Activated CD4-positive, alpha-beta memory T cell treated with anti-CD3 and anti-CD28 coated beads, Interleukin-2, amount 10 ng/mL, durations not matched to agents 7 days and 5 days (primary cell): ENCODE measurements at regions of chr2 and their contacts with region 1.

Region 1: DNA sequence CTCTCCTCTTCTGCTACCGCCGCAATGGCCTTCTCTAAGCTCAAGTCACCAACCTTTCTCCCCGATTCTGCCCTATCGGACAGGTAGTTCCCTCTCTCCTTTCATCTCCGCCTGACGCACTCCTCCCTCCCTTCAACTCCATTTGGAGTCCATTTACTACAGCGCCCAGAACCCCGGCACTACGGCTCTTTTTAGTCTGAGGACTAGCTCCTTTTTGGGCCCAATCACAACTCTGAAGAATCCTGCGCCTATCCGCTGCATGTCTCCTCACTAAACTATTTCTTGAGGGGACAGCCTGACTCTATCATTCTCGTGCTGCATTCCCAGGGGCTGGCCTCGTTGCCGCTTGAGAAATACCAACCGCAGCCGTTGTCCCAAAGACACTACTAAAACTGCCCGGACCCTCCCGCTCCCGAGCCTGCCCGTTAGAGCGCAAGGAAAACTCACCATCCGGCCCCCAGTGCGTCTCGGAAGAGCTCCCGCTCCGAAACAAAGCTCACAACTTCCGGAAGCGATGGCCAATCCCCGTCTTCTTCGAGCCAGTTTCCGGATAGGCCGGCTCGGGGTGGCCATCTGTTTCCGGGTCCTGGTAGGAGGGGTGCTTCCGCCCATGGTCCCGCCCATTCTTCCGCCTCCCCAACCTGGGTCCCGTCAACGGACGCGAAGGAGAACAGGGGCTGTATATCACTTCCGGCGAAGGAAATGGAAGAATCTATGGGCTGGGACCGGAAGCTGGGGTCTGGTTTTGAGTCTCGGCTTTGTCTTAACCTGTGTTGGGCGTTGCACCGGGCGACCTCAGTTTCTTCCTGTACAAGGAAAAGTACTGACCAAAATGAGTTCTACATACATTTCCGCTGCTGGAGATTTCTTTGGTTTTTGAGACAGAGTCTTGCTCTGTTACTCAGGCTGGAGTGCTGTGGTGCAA is at the start of gene TPRKB:
- DNase-seq: peak; percentile 98
- H3K4me3 Mint-ChIP-seq: peak within 1 kb of the TSS; percentile 97
- H3K27ac Mint-ChIP-seq: peak within 1 kb of the TSS; percentile 91
- H3K4me1 Mint-ChIP-seq: peaks cover 20% of the 10 kb centered on the region
- H3K27me3 Mint-ChIP-seq: no peaks in the 10 kb centered on the region
- total RNA-seq, gene TPRKB: 32.9 TPM

Region 2: DNA sequence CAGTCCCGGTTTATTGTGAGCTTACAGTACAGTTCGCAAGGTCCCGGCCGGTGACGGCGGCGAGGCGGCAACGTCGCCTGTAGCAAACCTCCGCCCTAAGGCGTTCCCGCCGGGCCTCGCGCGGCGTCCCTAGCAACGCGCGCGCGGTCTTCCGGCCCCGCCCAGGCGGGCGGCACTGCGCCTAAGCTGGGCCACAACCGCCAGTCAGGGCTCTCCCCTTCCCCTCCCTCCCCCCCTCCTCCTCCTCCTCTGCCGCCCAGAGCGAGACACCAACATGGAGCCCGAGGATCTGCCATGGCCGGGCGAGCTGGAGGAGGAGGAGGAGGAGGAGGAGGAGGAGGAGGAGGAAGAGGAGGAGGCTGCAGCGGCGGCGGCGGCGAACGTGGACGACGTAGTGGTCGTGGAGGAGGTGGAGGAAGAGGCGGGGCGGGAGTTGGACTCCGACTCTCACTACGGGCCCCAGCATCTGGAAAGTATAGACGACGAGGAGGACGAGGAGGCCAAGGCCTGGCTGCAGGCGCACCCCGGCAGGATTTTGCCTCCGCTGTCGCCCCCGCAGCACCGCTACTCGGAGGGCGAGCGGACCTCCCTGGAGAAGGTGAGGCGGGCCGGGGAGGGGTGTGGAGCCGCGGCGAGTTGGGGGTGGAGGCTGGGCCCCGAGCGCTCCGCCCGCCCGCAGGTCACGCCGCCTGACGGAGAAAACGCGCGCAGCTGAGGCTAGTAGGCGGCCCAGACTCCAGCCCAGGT is 351.3 kb before region 1 on chr2 and contains the start of gene ALMS1:
- CTCF ChIA-PET with region 1: no interaction called
- POLR2A ChIA-PET with region 1: interaction called, 14 read pairs
- DNase-seq: peak; percentile 92
- H3K4me3 Mint-ChIP-seq: peak within 1 kb of the TSS; percentile 90
- H3K27ac Mint-ChIP-seq: peak within 1 kb of the TSS; percentile 85
- H3K4me1 Mint-ChIP-seq: peaks cover 32% of the 10 kb centered on the region
- H3K27me3 Mint-ChIP-seq: peaks cover 4% of the 10 kb centered on the region
- total RNA-seq, gene ALMS1: 16.1 to 20.4 TPM

Region 3: GRCh38 chr2:73685770-73686438 is 51.2 kb before region 1 on chr2:
- CTCF ChIA-PET with region 1: no interaction called
- POLR2A ChIA-PET with region 1: no interaction called
- DNase-seq: no peak
- H3K4me3 Mint-ChIP-seq: no peak overlapping the region
- H3K27ac Mint-ChIP-seq: no peak overlapping the region
- H3K4me1 Mint-ChIP-seq: no peaks in the 10 kb centered on the region
- H3K27me3 Mint-ChIP-seq: peaks cover 6% of the 10 kb centered on the region

Region 4: GRCh38 chr2:73859721-73860586 is 122.8 kb after region 1 on chr2:
- CTCF ChIA-PET with region 1: no interaction called
- POLR2A ChIA-PET with region 1: no interaction called
- DNase-seq: peak; percentile 44
- H3K4me3 Mint-ChIP-seq: no peak overlapping the region
- H3K27ac Mint-ChIP-seq: no peak overlapping the region
- H3K4me1 Mint-ChIP-seq: peaks cover 17% of the 10 kb centered on the region
- H3K27me3 Mint-ChIP-seq: no peaks in the 10 kb centered on the region